GM13976 (cell line): ENCODE measurements at regions of chr4 and their contacts with region 1.

Region 1: DNA sequence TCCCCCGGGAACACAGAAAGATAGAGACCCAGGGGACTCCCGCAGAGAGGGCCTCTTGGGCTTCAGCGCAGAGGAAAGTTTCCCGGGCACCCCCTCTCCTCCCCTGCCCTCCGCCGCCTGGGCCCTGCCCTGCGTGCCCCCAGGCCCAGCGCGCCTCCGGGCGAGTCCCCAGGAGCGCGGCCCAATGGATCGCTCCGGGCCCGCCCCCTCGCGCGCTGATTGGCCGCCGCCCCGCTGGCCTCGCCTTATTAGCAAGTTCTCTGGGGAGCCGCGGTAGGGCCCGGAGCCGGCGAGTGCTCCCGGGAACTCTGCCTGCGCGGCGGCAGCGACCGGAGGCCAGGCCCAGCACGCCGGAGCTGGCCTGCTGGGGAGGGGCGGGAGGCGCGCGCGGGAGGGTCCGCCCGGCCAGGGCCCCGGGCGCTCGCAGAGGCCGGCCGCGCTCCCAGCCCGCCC is at the start of gene MSX1:
- DNase-seq: peak; percentile 89
- CTCF ChIP-seq: no peak

Region 2: GRCh38 chr4:4689694-4690440 is 169.5 kb before region 1 on chr4:
- in situ Hi-C with region 1: loop called (anchors 10 kb)
- DNase-seq: peak; percentile 62
- CTCF ChIP-seq: no peak

Region 3: GRCh38 chr4:4762909-4763821 is 96.3 kb before region 1 on chr4:
- in situ Hi-C with region 1: loop called (anchors 25 kb)
- DNase-seq: peak; percentile 75
- CTCF ChIP-seq: no peak